ENCODE measurements at regions of chr3 and their contacts with region 1.

Region 1: GRCh38 chr3:183188895-183189462 is 26.4 kb upstream of the LAMP3 start:
- DNase-seq: peak; percentile 30
- H3K4me3 Mint-ChIP-seq: no peak overlapping the region
- H3K27ac Mint-ChIP-seq: no peak overlapping the region
- H3K4me1 Mint-ChIP-seq: peaks cover 6% of the 10 kb centered on the region
- H3K27me3 Mint-ChIP-seq: no peaks in the 10 kb centered on the region
- CTCF ChIP-seq: no peak

Region 2: GRCh38 chr3:183252973-183253901 is 64.3 kb after region 1 on chr3 and contains the start of gene B3GNT5:
- CTCF ChIA-PET with region 1: interaction called, 36 read pairs
- POLR2A ChIA-PET with region 1: interaction called, 31 read pairs
- intact Hi-C with region 1: loop called (anchors 1 kb)
- DNase-seq: peak; percentile 85
- H3K4me3 Mint-ChIP-seq: peak within 1 kb of the TSS; percentile 93
- H3K27ac Mint-ChIP-seq: no peak within 1 kb of the TSS
- H3K4me1 Mint-ChIP-seq: peaks cover 38% of the 10 kb centered on the region
- H3K27me3 Mint-ChIP-seq: no peaks in the 10 kb centered on the region
- CTCF ChIP-seq: no peak
- total RNA-seq, gene B3GNT5: 80.1 and 104 TPM in 2 replicates

Region 3: DNA sequence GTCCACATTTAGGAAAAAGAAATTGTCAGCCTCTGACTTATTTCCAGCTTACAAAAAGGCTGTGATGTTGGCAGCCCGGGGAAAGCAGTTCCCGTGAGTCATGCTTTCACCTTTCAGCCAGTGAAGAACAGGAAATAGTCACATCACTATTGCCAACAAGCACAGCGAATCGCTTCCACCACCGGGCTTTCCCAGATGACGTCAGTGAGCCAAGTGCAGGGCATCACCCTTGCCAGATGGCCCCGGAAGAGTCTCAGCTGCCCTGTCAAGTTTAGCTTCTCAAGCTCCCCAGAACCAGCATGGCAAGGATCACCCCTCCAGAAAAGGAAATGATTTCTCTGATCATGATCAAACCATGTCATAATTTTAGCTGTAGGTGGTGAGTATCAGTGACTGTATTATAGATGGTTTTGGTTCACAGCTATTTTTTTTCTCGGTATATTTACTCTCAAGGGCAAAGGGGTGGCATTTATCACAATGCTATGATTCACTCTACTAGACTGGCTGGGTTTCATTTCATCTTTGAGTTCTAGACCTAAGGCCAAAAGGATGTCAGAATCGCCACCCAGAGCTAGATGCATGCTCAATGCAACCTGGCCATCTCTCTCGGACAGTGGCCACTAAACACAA is 97.0 kb after region 1 on chr3:
- CTCF ChIA-PET with region 1: interaction called, 11 read pairs
- POLR2A ChIA-PET with region 1: interaction called, 5 read pairs
- intact Hi-C with region 1: loop called (anchors 10 kb)
- DNase-seq: peak; percentile 99
- H3K4me3 Mint-ChIP-seq: peak overlapping the region; percentile 48
- H3K27ac Mint-ChIP-seq: peak overlapping the region; percentile 91
- H3K4me1 Mint-ChIP-seq: peaks cover 31% of the 10 kb centered on the region
- H3K27me3 Mint-ChIP-seq: no peaks in the 10 kb centered on the region
- CTCF ChIP-seq: no peak

Region 4: GRCh38 chr3:183328823-183329222 is 139.8 kb after region 1 on chr3:
- CTCF ChIA-PET with region 1: interaction called, 9 read pairs
- POLR2A ChIA-PET with region 1: interaction called, 3 read pairs
- intact Hi-C with region 1: loop called (anchors 2 kb)
- DNase-seq: peak; percentile 46
- H3K4me3 Mint-ChIP-seq: no peak overlapping the region
- H3K27ac Mint-ChIP-seq: peak overlapping the region; percentile 50
- H3K4me1 Mint-ChIP-seq: peaks cover 32% of the 10 kb centered on the region
- H3K27me3 Mint-ChIP-seq: no peaks in the 10 kb centered on the region
- CTCF ChIP-seq: no peak

Region 5: GRCh38 chr3:183385698-183386613 is 197.0 kb after region 1 on chr3:
- CTCF ChIA-PET with region 1: interaction called, 383 read pairs
- POLR2A ChIA-PET with region 1: interaction called, 86 read pairs
- intact Hi-C with region 1: loop called (anchors 1 kb)
- DNase-seq: peak; percentile 78
- H3K4me3 Mint-ChIP-seq: no peak overlapping the region
- H3K27ac Mint-ChIP-seq: no peak overlapping the region
- H3K4me1 Mint-ChIP-seq: peaks cover 18% of the 10 kb centered on the region
- H3K27me3 Mint-ChIP-seq: no peaks in the 10 kb centered on the region
- CTCF ChIP-seq: peak; percentile 77

Region 6: DNA sequence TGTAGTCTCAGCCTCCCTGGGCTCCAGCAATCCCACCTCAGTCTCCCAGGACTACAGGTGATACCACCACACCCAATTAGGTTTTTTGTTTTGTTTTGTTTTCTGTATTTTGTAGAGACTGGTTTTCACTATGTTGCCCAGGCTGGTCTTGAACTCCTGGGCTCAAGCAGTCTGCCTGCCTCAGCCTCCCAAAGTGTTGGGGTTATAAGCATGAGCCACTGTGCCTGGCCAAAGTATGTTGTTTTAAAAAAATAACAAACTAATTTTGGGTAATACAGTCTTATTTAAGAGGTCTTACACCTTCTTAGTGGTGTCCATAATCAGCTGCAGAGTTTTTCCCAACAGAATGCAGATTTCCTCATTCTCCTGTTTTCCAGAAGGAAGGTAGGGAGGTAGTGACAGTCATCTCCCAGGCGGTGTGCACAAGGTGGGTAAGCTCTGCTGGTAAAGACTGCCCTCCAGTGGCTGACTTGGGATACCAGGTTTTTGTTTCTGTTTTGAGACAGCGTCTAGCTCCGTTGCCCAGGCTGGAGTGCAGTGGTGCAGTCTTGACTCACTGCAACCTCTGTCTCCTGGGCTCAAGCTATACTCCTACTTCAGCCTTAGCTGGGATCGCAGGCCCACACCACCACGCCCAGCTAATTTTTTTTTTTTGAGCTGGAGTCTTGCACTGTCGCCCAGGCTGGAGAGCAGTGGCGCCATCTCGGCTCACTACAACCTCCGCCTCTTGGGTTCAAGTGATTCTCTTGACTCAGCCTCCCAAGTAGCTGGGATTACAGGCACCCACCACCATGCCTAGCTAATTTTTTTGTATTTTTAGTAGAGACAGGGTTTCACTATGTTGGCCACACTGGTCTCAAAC is 578.0 kb after region 1 on chr3:
- CTCF ChIA-PET with region 1: interaction called, 4 read pairs
- POLR2A ChIA-PET with region 1: no interaction called
- intact Hi-C with region 1: loop called (anchors 2 kb)
- DNase-seq: peak; percentile 83
- H3K4me3 Mint-ChIP-seq: no peak overlapping the region
- H3K27ac Mint-ChIP-seq: peak overlapping the region; percentile 14
- H3K4me1 Mint-ChIP-seq: peaks cover 16% of the 10 kb centered on the region
- H3K27me3 Mint-ChIP-seq: no peaks in the 10 kb centered on the region
- CTCF ChIP-seq: peak; percentile 78